Left cardiac atrium (tissue), 4 donors: ENCODE measurements at regions of chrX and their contacts with region 1.

Region 1: GRCh38 chrX:25144043-25144940 is 128.5 kb upstream of the ARX start:
- DNase-seq: peak; percentile 54
- ATAC-seq: peak; percentile 23 to 44

Region 2: DNA sequence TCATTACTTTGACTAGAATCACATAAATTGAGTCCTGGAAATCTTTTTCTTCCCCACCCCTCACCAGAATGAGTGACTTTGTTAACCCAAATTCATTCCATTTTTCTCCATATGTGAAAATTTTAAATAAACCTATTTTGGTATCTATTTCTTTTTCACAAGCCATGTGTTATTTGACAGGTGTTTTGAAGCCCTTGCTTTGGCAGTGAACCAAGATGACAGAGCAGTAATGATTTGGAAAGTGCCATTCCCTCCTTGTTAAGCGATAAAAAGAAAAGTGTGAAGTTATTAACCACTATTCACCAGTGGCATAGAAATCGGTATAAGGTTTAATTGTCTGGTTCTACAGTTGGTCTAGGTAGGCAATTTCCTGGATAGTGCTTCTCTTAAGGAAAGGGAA is 384.5 kb before region 1 on chrX:
- intact Hi-C with region 1: loop called in 1 of 2 experiments (anchors 5 kb)
- DNase-seq: no peak
- ATAC-seq: no peak

Region 3: DNA sequence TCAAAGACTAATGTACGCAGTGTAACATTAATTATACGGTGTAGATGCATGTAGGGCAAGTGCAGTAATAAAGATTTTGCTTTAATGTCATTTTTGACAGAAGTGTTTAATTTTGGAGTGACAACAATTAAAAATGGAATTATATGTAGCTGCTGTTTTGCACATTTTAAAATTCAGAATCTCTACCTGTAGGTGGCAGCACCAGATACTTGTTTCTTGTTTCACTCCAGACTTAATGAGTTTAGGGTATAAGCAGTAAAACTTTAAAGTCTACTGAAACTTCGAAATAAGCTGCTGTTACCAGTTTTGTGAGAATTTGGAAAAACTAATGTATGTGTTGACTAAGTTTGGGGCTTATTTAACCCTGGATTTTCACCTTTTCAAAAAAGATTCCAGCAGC is 305.7 kb before region 1 on chrX:
- intact Hi-C with region 1: loop called (anchors 2 to 5 kb)
- DNase-seq: no peak
- ATAC-seq: no peak

Region 4: DNA sequence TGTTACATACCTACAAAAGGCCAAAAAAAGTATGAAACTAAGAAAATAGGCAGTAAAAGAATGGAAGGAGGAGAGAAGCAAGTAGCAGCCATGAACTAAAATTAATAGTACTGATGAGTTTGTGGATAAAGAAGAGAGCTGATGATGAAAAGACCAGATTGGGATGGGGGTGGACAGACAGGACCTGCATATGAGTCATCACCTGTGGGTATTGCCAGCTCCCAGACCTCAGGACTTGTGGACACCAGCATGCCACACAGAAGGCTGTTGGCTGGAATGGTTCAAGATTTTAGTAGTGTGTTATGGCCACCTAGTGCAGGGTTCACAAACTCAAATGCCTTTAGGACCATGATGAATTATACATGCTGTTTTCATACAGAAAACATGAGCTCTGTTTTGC is 187.5 kb before region 1 on chrX:
- intact Hi-C with region 1: no loop called
- DNase-seq: no peak
- ATAC-seq: no peak

Region 5: DNA sequence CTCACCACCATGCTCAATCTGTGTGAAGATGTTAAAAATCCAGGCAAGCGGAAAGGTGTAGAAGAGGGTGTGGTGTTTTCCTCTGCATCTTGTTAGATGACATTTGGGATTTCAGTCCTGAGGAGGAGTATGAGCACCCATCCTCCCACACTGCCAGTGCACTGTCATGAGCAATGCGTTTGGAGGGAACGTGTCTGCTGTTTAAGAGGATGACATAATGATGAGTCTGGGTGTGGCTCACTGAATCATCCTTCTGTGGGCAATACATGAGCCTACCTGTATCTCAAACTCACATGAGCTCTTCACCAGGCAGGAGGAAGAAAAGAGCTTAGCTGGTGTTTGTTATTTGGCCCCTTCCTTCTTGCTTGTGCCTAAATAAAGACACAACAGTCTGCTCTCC is 60.6 kb before region 1 on chrX:
- intact Hi-C with region 1: no loop called
- DNase-seq: no peak
- ATAC-seq: no peak